ENCODE measurements at regions of chr3 and their contacts with region 1.

Region 1: GRCh38 chr3:78858174-78858573 is 909.6 kb downstream of the ROBO1 start:
- DNase-seq: no peak
- H3K4me3 ChIP-seq: no peak overlapping the region
- H3K27ac ChIP-seq: no peak overlapping the region
- H3K4me1 ChIP-seq: no peaks in the 10 kb centered on the region
- H3K27me3 ChIP-seq: no peaks in the 10 kb centered on the region
- CTCF ChIP-seq: no peak

Region 2: GRCh38 chr3:78957456-78957855 is 99.3 kb after region 1 on chr3:
- CTCF ChIA-PET with region 1: no interaction called
- POLR2A ChIA-PET with region 1: no interaction called
- intact Hi-C with region 1: no loop called
- DNase-seq: no peak
- H3K4me3 ChIP-seq: no peak overlapping the region
- H3K27ac ChIP-seq: no peak overlapping the region
- H3K4me1 ChIP-seq: no peaks in the 10 kb centered on the region
- H3K27me3 ChIP-seq: no peaks in the 10 kb centered on the region
- CTCF ChIP-seq: no peak

Region 3: GRCh38 chr3:79534727-79535126 is 676.6 kb after region 1 on chr3:
- CTCF ChIA-PET with region 1: interaction called, 12 read pairs
- POLR2A ChIA-PET with region 1: no interaction called
- intact Hi-C with region 1: no loop called
- DNase-seq: no peak
- H3K4me3 ChIP-seq: no peak overlapping the region
- H3K27ac ChIP-seq: no peak overlapping the region
- H3K4me1 ChIP-seq: peaks cover 14% of the 10 kb centered on the region
- H3K27me3 ChIP-seq: no peaks in the 10 kb centered on the region
- CTCF ChIP-seq: no peak